CD14-positive monocyte (primary cell): ENCODE measurements at regions of chr7 and their contacts with region 1.

Region 1: GRCh38 chr7:17298207-17298839 is at the start of gene AHR:
- DNase-seq: peak; percentile 84 to 95 (median 92)
- H3K4me3 ChIP-seq: peak within 1 kb of the TSS; percentile 96
- H3K4me3 Mint-ChIP-seq: peak within 1 kb of the TSS; percentile 91 to 99
- H3K27ac ChIP-seq: peak within 1 kb of the TSS; percentile 77 to 94
- H3K27ac Mint-ChIP-seq: peak within 1 kb of the TSS; percentile 87 to 97 (median 92)
- H3K4me1 ChIP-seq: peaks cover 22 to 29% of the 10 kb centered on the region in 2 donors
- H3K4me1 Mint-ChIP-seq: peaks cover 23% of the 10 kb centered on the region
- H3K27me3 ChIP-seq: no peaks in the 10 kb centered on the region
- H3K27me3 Mint-ChIP-seq: peaks cover 0 to 3% (median 0%) of the 10 kb centered on the region in 3 donors
- CTCF ChIP-seq: no peak
- polyA plus RNA-seq, gene AHR: 42.4 to 56.6 (median 54.1) TPM

Region 2: GRCh38 chr7:16982640-16983350 is 315.5 kb before region 1 on chr7:
- intact Hi-C with region 1: loop called (anchors 2 to 10 kb)
- DNase-seq: peak; percentile 29 to 62 (median 54)
- H3K4me3 ChIP-seq: no peak overlapping the region
- H3K4me3 Mint-ChIP-seq: peak overlapping the region; percentile 3 to 72
- H3K27ac ChIP-seq: no peak overlapping the region
- H3K27ac Mint-ChIP-seq: peak overlapping the region in 4 of 7 donors; percentile 10 to 62 (median 38)
- H3K4me1 ChIP-seq: peaks cover 0 to 3% of the 10 kb centered on the region in 2 donors
- H3K4me1 Mint-ChIP-seq: peaks cover 13% of the 10 kb centered on the region
- H3K27me3 ChIP-seq: no peaks in the 10 kb centered on the region
- H3K27me3 Mint-ChIP-seq: peaks cover 0 to 1% (median 0%) of the 10 kb centered on the region in 3 donors
- CTCF ChIP-seq: peak; percentile 98

Region 3: DNA sequence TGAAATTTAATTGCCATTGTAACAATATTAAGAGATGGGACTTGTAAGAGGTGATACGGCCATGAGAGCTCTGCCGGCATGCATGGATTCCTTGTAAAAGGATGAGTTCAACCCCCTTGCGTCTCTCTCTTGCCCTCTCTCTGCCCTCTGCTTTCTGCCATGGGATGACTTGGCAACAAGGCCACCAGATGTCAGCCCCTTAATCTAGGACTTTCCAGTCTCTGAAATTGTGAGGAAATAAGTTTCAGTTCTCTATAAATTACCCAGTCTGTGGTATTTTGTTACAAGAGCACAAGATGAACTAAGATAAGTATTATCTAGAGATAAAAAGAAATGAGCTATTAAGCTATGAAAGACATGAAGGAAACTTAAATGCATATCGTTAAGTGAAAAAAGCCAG is 145.6 kb before region 1 on chr7:
- intact Hi-C with region 1: loop called in 1 of 2 experiments (anchors 2 kb)
- DNase-seq: peak; percentile 86 to 94 (median 93)
- H3K4me3 ChIP-seq: peak overlapping the region in 1 of 3 experiments; percentile 27
- H3K4me3 Mint-ChIP-seq: peak overlapping the region in 1 of 2 donors; percentile 76
- H3K27ac ChIP-seq: peak overlapping the region; percentile 54 to 89
- H3K27ac Mint-ChIP-seq: peak overlapping the region; percentile 96 to 99 (median 98)
- H3K4me1 ChIP-seq: peaks cover 43 to 55% of the 10 kb centered on the region in 2 donors
- H3K4me1 Mint-ChIP-seq: peaks cover 49% of the 10 kb centered on the region
- H3K27me3 ChIP-seq: no peaks in the 10 kb centered on the region
- H3K27me3 Mint-ChIP-seq: no peaks in the 10 kb centered on the region
- CTCF ChIP-seq: no peak

Region 4: GRCh38 chr7:17234398-17235031 is 63.8 kb before region 1 on chr7:
- intact Hi-C with region 1: loop called in 1 of 2 experiments (anchors 5 kb)
- DNase-seq: peak; percentile 93 to 99 (median 97)
- H3K4me3 ChIP-seq: peak overlapping the region; percentile 12 to 29 (median 19)
- H3K4me3 Mint-ChIP-seq: peak overlapping the region; percentile 68 to 81
- H3K27ac ChIP-seq: peak overlapping the region; percentile 96 to 100
- H3K27ac Mint-ChIP-seq: peak overlapping the region; percentile 99 to 100 (median 100)
- H3K4me1 ChIP-seq: peaks cover 19 to 24% of the 10 kb centered on the region in 2 donors
- H3K4me1 Mint-ChIP-seq: peaks cover 26% of the 10 kb centered on the region
- H3K27me3 ChIP-seq: no peaks in the 10 kb centered on the region
- H3K27me3 Mint-ChIP-seq: peaks cover 0 to 3% (median 0%) of the 10 kb centered on the region in 3 donors
- CTCF ChIP-seq: no peak

Region 5: GRCh38 chr7:17247357-17247756 is 51.0 kb before region 1 on chr7:
- intact Hi-C with region 1: no loop called
- DNase-seq: no peak
- H3K4me3 ChIP-seq: no peak overlapping the region
- H3K4me3 Mint-ChIP-seq: no peak overlapping the region
- H3K27ac ChIP-seq: no peak overlapping the region
- H3K27ac Mint-ChIP-seq: no peak overlapping the region
- H3K4me1 ChIP-seq: no peaks in the 10 kb centered on the region
- H3K4me1 Mint-ChIP-seq: no peaks in the 10 kb centered on the region
- H3K27me3 ChIP-seq: no peaks in the 10 kb centered on the region
- H3K27me3 Mint-ChIP-seq: peaks cover 0 to 2% (median 0%) of the 10 kb centered on the region in 3 donors
- CTCF ChIP-seq: no peak